Adrenal gland (tissue), 19 donors: ENCODE measurements at regions of chr14 and their contacts with region 1.

Region 1: GRCh38 chr14:63282997-63283883 is 35.5 kb downstream of the GPHB5 start:
- DNase-seq: no peak
- H3K4me3 ChIP-seq: no peak overlapping the region
- H3K27ac ChIP-seq: no peak overlapping the region
- H3K4me1 ChIP-seq: no peaks in the 10 kb centered on the region
- H3K27me3 ChIP-seq: no peaks in the 10 kb centered on the region
- CTCF ChIP-seq: no peak
- POLR2A ChIP-seq: no peak

Region 2: GRCh38 chr14:62179367-62180018 is 1103.7 kb before region 1 on chr14:
- intact Hi-C with region 1: loop called in 1 of 2 experiments (anchors 10 kb)
- DNase-seq: peak; percentile 45 to 90 (median 63)
- H3K4me3 ChIP-seq: no peak overlapping the region
- H3K27ac ChIP-seq: no peak overlapping the region
- H3K4me1 ChIP-seq: no peaks in the 10 kb centered on the region
- H3K27me3 ChIP-seq: no peaks in the 10 kb centered on the region
- CTCF ChIP-seq: peak; percentile 22 to 58 (median 47)
- POLR2A ChIP-seq: no peak